ENCODE measurements at regions of chr14 and their contacts with region 1.

Region 1: GRCh38 chr14:101183376-101184103 is 280.0 kb upstream of the RTL1 start:
- DNase-seq: peak; percentile 86
- ATAC-seq: peak; percentile 91
- H3K4me3 Mint-ChIP-seq: no peak overlapping the region
- H3K27ac Mint-ChIP-seq: no peak overlapping the region
- H3K4me1 Mint-ChIP-seq: no peaks in the 10 kb centered on the region
- H3K27me3 Mint-ChIP-seq: no peaks in the 10 kb centered on the region
- CTCF ChIP-seq: peak; percentile 40; the same call in 1 of the 2 replicates

Region 2: GRCh38 chr14:101098641-101099040 is 84.9 kb before region 1 on chr14:
- CTCF ChIA-PET with region 1: no interaction called
- POLR2A ChIA-PET with region 1: no interaction called
- DNase-seq: no peak
- ATAC-seq: peak; percentile 46; the same call in 1 of the 2 replicates
- H3K4me3 Mint-ChIP-seq: no peak overlapping the region
- H3K27ac Mint-ChIP-seq: no peak overlapping the region
- H3K4me1 Mint-ChIP-seq: peaks cover 29% of the 10 kb centered on the region
- H3K27me3 Mint-ChIP-seq: no peaks in the 10 kb centered on the region; the same call in 1 of the 2 replicates
- CTCF ChIP-seq: no peak

Region 3: GRCh38 chr14:101194373-101195308 is 11.1 kb after region 1 on chr14:
- CTCF ChIA-PET with region 1: interaction called, 18 read pairs
- POLR2A ChIA-PET with region 1: no interaction called
- DNase-seq: no peak
- ATAC-seq: no peak
- H3K4me3 Mint-ChIP-seq: no peak overlapping the region
- H3K27ac Mint-ChIP-seq: no peak overlapping the region
- H3K4me1 Mint-ChIP-seq: peaks cover 14% of the 10 kb centered on the region
- H3K27me3 Mint-ChIP-seq: peaks cover 2% of the 10 kb centered on the region; the same call in 1 of the 2 replicates
- CTCF ChIP-seq: no peak

Region 4: DNA sequence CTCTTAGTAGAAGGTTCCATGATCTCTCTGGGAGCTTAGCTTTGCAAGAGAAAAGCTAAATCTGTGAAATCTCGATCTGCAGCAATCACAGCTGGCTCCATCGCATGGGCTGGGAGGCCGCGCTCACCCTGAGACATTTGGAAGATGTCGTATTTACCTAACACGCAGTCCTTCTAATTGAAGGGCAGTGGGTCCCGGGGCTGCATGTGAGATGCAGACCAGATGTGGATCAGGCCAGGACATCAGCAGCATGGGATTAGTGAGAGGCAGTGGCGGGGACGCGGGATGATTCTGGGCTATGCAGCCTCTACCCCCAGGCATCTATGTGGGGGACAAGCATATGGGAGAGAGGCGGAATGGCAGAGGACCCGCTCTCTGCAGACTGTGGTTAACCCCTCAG is 32.4 kb after region 1 on chr14:
- CTCF ChIA-PET with region 1: interaction called, 10 read pairs
- POLR2A ChIA-PET with region 1: no interaction called
- DNase-seq: peak; percentile 4
- ATAC-seq: no peak
- H3K4me3 Mint-ChIP-seq: no peak overlapping the region
- H3K27ac Mint-ChIP-seq: no peak overlapping the region
- H3K4me1 Mint-ChIP-seq: peaks cover 10% of the 10 kb centered on the region
- H3K27me3 Mint-ChIP-seq: peaks cover 8% of the 10 kb centered on the region
- CTCF ChIP-seq: no peak

Region 5: DNA sequence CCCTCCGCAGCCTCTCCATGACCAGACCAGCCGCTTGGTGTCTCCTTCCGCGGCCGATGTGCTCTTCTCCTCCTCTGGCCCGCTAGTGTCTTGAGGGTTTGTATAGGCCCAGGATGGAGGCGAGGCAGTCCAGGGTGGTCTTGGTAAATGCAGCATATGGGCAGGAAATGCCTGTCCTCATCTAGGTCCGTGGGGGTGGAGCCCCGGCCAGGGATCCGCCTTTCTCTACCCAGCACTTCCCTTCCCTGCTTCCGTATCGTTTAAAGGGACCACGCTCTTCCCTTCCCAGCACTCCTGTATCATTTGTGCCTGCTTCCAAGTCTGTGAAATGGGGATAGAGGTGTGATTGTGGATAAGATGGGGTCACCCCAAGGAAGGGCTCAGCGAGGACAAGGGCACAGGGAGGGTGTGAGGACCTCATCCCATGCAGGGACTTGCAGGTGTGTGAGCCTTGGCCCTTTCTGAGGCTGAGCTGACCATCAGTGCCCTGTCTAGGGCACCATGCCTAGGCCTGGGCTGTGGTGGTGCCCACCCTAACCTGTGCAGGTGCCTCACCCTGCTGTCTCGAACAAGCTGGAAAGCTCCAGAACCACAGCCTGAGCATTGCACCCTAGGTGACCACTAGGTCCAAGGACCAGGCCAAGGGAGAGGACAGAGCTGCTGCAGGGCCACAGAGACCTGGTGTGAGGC is 46.8 kb after region 1 on chr14:
- CTCF ChIA-PET with region 1: interaction called, 16 read pairs
- POLR2A ChIA-PET with region 1: no interaction called
- DNase-seq: no peak
- ATAC-seq: no peak
- H3K4me3 Mint-ChIP-seq: no peak overlapping the region
- H3K27ac Mint-ChIP-seq: no peak overlapping the region
- H3K4me1 Mint-ChIP-seq: peaks cover 9% of the 10 kb centered on the region
- H3K27me3 Mint-ChIP-seq: no peaks in the 10 kb centered on the region; the same call in 1 of the 2 replicates
- CTCF ChIP-seq: no peak

Region 6: DNA sequence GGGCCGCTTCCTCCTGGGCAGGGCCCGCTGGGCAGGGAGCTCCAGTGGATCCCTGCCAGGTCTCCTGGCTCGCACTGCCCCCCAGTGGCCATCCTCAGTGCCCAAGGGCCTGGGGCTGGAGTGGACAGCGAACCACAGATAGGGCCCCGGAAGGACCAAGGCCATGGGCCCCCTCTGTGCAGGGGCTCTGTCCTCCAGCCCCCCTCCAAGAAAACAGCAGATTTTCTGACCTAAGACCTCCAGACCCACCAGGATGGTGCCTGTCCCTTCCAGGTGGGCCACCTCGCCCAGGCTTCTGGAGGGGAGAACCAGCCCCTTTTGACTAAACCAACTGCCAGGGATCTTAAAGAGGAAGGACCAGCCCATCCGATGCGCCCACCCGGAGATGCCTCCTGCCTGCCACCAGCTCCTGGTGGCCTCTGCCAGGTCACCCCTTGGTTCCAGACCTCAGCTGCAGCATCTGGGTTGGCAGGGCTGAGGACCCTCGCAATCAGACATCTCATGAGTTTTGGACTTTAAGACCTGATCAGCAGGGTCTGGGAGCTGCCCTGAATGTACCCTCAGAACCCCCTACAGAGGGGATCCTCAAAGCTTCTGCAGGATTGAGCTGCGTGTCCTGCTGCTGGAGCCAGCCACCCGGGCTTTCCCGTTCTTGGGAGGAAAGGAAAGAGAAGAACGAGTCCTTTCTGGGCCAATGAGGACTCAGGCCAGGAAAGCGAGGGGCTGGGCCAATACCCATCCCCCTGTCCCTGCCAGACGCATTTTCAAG is 52.0 kb after region 1 on chr14:
- CTCF ChIA-PET with region 1: interaction called, 16 read pairs
- POLR2A ChIA-PET with region 1: no interaction called
- DNase-seq: peak; percentile 85
- ATAC-seq: peak; percentile 90
- H3K4me3 Mint-ChIP-seq: no peak overlapping the region
- H3K27ac Mint-ChIP-seq: no peak overlapping the region
- H3K4me1 Mint-ChIP-seq: peaks cover 10% of the 10 kb centered on the region
- H3K27me3 Mint-ChIP-seq: no peaks in the 10 kb centered on the region; the same call in 1 of the 2 replicates
- CTCF ChIP-seq: peak; percentile 68

Region 7: DNA sequence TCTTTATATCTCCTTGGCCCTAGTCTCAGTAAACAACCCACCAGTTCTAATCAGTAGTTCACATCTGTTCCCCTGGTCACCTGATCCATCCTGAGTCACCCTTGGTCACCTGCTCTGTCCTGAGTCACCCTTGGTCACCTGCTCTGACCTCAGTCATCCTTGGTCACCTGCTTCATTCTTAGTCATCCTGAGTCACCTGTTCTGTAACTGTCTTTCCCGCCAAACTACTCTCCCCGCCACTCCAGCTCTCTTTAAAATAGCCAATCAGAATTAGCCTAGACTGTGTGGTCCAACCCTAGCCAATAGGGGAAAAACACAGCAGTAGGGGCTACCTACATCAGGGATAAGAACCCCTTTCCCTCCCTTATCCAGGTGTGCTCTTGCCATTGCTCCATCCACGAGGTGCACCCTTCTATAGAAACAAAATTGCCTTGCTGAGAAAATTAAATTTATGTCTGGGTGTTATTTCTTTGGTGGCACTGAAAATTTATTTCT is 132.3 kb after region 1 on chr14:
- CTCF ChIA-PET with region 1: no interaction called
- POLR2A ChIA-PET with region 1: no interaction called
- DNase-seq: no peak
- ATAC-seq: no peak
- H3K4me3 Mint-ChIP-seq: no peak overlapping the region
- H3K27ac Mint-ChIP-seq: no peak overlapping the region
- H3K4me1 Mint-ChIP-seq: peaks cover 4% of the 10 kb centered on the region
- H3K27me3 Mint-ChIP-seq: peaks cover 11% of the 10 kb centered on the region
- CTCF ChIP-seq: no peak

Region 8: GRCh38 chr14:101357559-101358319 is 174.2 kb after region 1 on chr14:
- CTCF ChIA-PET with region 1: interaction called, 11 read pairs
- POLR2A ChIA-PET with region 1: no interaction called
- DNase-seq: no peak
- ATAC-seq: no peak
- H3K4me3 Mint-ChIP-seq: no peak overlapping the region
- H3K27ac Mint-ChIP-seq: no peak overlapping the region
- H3K4me1 Mint-ChIP-seq: peaks cover 6% of the 10 kb centered on the region; the same call in 1 of the 2 replicates
- H3K27me3 Mint-ChIP-seq: peaks cover 2% of the 10 kb centered on the region; the same call in 1 of the 2 replicates
- CTCF ChIP-seq: no peak